Activated CD4-positive, alpha-beta T cell treated with anti-CD3 and anti-CD28 coated beads for 36 hours (primary cell): ENCODE measurements at regions of chr19 and their contacts with region 1.

Region 1: DNA sequence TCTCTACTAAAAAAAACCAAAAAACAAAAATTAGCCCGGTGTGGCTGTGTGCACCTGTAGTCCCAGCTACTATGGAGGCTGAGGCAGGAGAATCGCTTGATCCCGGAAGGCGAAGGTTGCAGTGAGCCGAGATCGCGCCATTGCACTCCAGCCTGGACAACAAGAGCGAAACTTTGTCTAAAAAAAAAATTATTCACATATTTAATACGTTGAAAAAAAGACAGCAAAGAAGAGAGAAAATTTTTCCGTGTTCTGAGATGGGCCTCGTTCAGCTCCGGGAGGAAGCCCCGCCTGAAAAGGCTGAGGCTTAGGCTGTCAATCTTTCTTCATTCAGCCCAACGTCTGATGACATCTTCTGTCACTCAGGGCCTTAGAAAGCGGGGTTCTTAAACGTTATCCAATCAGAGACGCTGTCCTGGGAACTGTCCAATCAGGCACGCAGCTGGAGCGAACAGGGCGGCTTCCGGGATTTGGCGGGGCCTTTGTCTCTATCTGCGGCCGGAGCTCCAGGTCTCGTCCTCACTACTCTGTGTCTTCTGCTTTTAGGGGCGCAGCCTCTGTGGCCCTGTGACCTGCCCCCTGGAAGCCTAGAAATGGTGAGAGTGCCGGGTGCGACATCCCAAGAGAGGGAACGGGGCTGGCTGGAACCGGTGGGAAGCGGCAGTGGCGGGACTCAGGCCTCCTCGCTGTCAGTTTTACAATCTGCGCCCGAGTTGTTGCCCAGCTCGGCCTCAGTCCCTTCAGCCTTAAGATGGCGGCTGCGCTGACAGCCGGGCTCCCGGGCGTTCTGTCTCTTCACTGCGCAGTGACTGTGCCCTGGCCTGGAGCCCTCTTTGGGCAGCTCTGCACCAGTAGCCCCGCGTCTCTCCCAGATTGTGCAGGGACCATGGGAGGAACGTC is at the start of gene ZNF726:
- DNase-seq: peak; percentile 94
- ATAC-seq: peak; percentile 99
- H3K4me3 Mint-ChIP-seq: peak within 1 kb of the TSS; percentile 94
- H3K27ac Mint-ChIP-seq: peak within 1 kb of the TSS; percentile 93
- H3K4me1 Mint-ChIP-seq: peaks cover 14% of the 10 kb centered on the region
- H3K27me3 Mint-ChIP-seq: no peaks in the 10 kb centered on the region
- total RNA-seq, gene ZNF726: 19.1 to 20.2 TPM

Region 2: GRCh38 chr19:22634450-22634827 is 1280.2 kb before region 1 on chr19:
- CTCF ChIA-PET with region 1: no interaction called
- POLR2A ChIA-PET with region 1: no interaction called
- intact Hi-C with region 1: loop called in 1 of 2 experiments (anchors 1 kb)
- DNase-seq: peak; percentile 36
- ATAC-seq: peak; percentile 28
- H3K4me3 Mint-ChIP-seq: peak overlapping the region; percentile 93
- H3K27ac Mint-ChIP-seq: peak overlapping the region; percentile 94
- H3K4me1 Mint-ChIP-seq: peaks cover 6% of the 10 kb centered on the region
- H3K27me3 Mint-ChIP-seq: no peaks in the 10 kb centered on the region

Region 3: DNA sequence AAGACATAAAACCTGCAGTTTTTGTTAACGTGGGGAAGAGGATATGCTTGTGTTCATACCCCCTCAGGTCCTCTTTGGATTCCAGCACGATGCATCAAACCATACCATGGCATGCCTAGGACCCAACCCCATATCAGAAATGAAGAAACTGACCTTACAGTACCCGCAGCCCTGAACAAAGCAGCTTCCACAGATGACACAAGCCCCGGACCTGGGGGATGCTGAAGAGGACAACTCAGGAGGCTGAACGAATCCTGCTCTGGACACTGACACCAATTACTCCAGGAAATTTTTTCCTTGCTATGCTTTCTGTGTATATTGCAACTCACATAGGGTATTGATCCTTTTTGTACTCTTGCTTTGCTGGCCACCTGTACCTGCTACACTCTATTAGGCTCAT is 357.3 kb before region 1 on chr19:
- CTCF ChIA-PET with region 1: no interaction called
- POLR2A ChIA-PET with region 1: interaction called, 11 read pairs
- intact Hi-C with region 1: no loop called
- DNase-seq: no peak
- ATAC-seq: no peak
- H3K4me3 Mint-ChIP-seq: no peak overlapping the region
- H3K27ac Mint-ChIP-seq: no peak overlapping the region
- H3K4me1 Mint-ChIP-seq: no peaks in the 10 kb centered on the region
- H3K27me3 Mint-ChIP-seq: no peaks in the 10 kb centered on the region

Region 4: DNA sequence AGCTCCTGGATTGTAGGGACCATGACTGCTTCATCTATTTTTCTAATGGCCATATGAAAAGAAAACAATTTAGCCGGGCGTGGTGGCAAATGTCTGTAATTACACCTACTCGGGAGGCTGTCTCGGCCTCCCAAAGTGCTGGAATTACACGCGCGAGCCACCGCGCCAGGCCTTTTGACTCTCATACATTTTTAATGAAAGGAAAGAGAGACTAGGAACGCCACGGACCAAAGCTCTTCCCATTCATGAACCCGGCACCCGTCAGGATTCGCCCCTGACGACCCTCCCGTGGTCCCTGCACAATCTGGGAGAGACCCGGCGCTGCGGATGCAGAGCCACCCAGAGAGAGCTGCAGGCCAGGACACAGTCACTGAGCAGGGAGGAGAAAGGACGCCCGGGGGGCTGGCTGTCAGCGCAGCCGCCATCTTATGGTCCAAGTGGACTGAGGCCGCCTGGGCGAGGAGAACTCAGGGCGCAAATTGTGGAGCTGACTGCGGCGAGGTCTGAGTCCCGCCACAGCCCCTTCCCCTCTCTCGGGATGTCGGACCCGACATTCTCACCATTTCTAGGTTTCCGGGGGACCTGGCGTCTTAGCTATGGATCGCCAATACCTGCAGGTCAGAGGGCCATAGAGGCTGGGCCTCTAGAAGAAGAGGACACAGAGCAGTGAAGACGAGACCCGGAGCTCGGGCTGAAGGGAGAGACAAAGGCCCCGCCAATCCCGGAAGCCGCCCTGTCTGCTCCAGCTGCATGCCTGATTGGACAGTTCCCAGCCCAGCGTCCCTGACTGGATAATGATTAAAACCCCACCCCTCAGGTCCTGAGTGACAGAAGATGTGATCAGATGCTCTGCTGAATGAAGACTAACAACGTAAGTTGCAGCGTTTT is 156.2 kb before region 1 on chr19 and contains the start of gene ZNF681:
- CTCF ChIA-PET with region 1: no interaction called
- POLR2A ChIA-PET with region 1: no interaction called
- intact Hi-C with region 1: loop called (anchors 2 kb)
- DNase-seq: peak; percentile 94
- ATAC-seq: peak; percentile 93
- H3K4me3 Mint-ChIP-seq: peak within 1 kb of the TSS; percentile 95
- H3K27ac Mint-ChIP-seq: peak within 1 kb of the TSS; percentile 95
- H3K4me1 Mint-ChIP-seq: peaks cover 25% of the 10 kb centered on the region
- H3K27me3 Mint-ChIP-seq: no peaks in the 10 kb centered on the region
- total RNA-seq, gene ZNF681: 5.7 to 9.1 TPM

Region 5: DNA sequence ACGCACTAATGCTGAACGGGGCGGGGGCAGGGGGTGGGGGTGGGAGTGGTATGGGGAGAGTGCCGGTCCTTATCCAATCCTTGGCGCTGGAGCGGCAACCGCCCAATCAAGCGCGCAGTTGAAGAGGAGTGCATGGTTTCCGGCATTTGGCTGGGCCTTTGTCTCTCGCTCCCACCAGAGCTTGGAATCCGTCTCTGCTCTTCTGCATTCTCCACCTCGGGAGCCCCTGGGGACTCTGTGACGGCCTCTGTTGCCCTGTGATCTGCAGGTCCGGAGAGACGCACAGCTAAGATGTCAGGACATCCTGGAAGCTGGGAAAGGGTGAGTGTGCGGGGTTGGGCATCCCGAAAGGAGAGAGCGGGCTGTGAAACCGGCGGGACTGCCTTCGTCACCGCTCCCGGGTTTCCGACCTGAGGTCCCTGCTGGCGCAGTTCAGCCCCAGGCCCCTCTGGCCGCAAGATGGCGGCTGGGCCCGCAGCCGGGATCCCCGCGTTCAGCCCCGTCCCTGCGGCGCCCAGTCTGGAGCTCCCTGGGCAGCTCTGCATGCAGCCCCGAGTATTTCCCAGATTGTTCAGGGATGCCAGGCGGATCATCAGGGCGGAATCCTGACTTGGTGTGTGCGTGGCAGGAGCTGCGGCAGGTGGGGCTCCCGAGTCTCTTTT is 118.8 kb after region 1 on chr19:
- CTCF ChIA-PET with region 1: no interaction called
- POLR2A ChIA-PET with region 1: interaction called, 5 read pairs
- intact Hi-C with region 1: loop called (anchors 1 to 2 kb)
- DNase-seq: peak; percentile 90
- ATAC-seq: peak; percentile 99
- H3K4me3 Mint-ChIP-seq: peak overlapping the region; percentile 99
- H3K27ac Mint-ChIP-seq: peak overlapping the region; percentile 98
- H3K4me1 Mint-ChIP-seq: peaks cover 36% of the 10 kb centered on the region
- H3K27me3 Mint-ChIP-seq: no peaks in the 10 kb centered on the region